PC-9 (cell line): ENCODE measurements at regions of chr3 and their contacts with region 1.

Region 1: DNA sequence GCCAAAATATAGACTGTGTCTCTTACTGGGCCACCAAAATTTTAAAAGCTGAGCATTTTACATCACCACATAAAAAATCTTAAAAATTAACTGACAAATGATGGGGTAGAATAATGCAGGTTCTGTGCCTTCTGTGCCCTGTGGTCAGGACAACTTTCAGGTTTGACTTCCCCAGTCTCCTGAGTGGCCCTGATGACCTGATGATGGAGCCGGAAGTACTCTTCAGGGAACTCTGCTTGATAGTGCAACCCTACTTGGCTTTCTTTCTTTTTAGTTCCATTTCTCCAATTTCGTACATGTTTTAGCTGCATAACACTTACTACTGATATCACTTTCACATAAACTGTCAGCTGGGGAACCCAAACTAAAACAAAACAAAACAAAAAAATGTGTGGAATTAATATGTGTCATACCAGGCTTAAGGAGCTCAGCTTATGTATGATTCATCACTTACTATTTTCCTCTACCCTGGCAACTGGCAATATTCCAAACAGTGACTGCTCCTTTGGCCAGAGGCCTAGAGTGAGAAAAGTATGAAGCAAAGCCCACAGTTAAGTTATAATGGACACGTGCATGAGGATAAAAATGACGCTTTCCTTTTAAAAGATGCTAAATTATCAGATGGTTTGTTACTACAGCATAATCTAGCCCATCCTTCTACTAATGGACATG is 194.3 kb downstream of the BCHE start:
- DNase-seq: peak; percentile 79 to 96
- H3K4me3 ChIP-seq: no peak overlapping the region
- H3K27ac ChIP-seq: peak overlapping the region; percentile 62
- H3K4me1 ChIP-seq: peaks cover 15% of the 10 kb centered on the region
- H3K27me3 ChIP-seq: no peaks in the 10 kb centered on the region
- CTCF ChIP-seq: no peak

Region 2: GRCh38 chr3:165568907-165569462 is 73.9 kb before region 1 on chr3:
- CTCF ChIA-PET with region 1: no interaction called
- POLR2A ChIA-PET with region 1: no interaction called
- intact Hi-C with region 1: loop called (anchors 5 kb)
- DNase-seq: no peak
- H3K4me3 ChIP-seq: no peak overlapping the region
- H3K27ac ChIP-seq: no peak overlapping the region
- H3K4me1 ChIP-seq: 0 out of 2 replicates have a peak, but pooled peaks cover 9% of the 10 kb centered on the region
- H3K27me3 ChIP-seq: no peaks in the 10 kb centered on the region
- CTCF ChIP-seq: no peak

Region 3: GRCh38 chr3:165728924-165729323 is 86.0 kb after region 1 on chr3:
- CTCF ChIA-PET with region 1: no interaction called
- POLR2A ChIA-PET with region 1: no interaction called
- intact Hi-C with region 1: no loop called
- DNase-seq: no peak
- H3K4me3 ChIP-seq: no peak overlapping the region
- H3K27ac ChIP-seq: no peak overlapping the region
- H3K4me1 ChIP-seq: no peaks in the 10 kb centered on the region
- H3K27me3 ChIP-seq: no peaks in the 10 kb centered on the region
- CTCF ChIP-seq: no peak